Mammary epithelial cell (primary cell): ENCODE measurements at regions of chr3 and their contacts with region 1.

Region 1: GRCh38 chr3:39809181-39809994 is at the start of gene MYRIP:
- DNase-seq: no peak
- H3K4me3 ChIP-seq: peak within 1 kb of the TSS in 2 of 3 experiments; percentile 27 to 41
- H3K27ac ChIP-seq: no peak within 1 kb of the TSS
- H3K4me1 ChIP-seq: peaks cover 8% of the 10 kb centered on the region
- H3K27me3 ChIP-seq: peaks cover 38% of the 10 kb centered on the region
- CTCF ChIP-seq: no peak
- total RNA-seq, gene MYRIP: 0.17 TPM in 1 of 2 donors, not detected in the other

Region 2: DNA sequence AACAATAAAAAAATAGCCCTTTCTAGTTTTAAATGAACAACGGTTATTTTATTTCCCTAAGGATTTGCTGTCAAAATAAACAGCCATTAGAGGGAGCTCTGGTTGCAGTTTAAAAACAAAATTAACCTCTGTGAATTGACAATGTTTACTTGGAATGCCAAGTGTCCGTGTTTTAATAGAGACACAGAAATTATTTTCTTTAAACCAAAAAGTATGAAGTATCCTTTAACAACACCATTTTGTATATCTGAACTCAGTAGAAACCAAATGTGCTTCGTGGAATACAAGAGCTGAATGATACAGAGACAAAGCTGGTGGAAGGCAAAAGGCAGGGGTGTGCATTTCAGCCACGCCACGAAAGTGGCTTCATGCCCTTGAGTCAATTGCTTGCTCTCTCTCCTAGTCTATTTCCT is 267.5 kb before region 1 on chr3:
- CTCF ChIA-PET with region 1: no interaction called
- dilution Hi-C with region 1: no loop called
- in situ Hi-C with region 1: no loop called
- intact Hi-C with region 1: loop called (anchors 5 kb)
- DNase-seq: no peak
- H3K4me3 ChIP-seq: no peak overlapping the region
- H3K27ac ChIP-seq: no peak overlapping the region
- H3K4me1 ChIP-seq: peaks cover 8% of the 10 kb centered on the region
- H3K27me3 ChIP-seq: no peaks in the 10 kb centered on the region
- CTCF ChIP-seq: peak; percentile 49 to 63

Region 3: GRCh38 chr3:39707314-39707909 is 102.0 kb before region 1 on chr3:
- CTCF ChIA-PET with region 1: no interaction called
- dilution Hi-C with region 1: no loop called
- in situ Hi-C with region 1: no loop called
- intact Hi-C with region 1: no loop called
- DNase-seq: no peak
- H3K4me3 ChIP-seq: no peak overlapping the region
- H3K27ac ChIP-seq: no peak overlapping the region
- H3K4me1 ChIP-seq: no peaks in the 10 kb centered on the region
- H3K27me3 ChIP-seq: peaks cover 5% of the 10 kb centered on the region
- CTCF ChIP-seq: peak; percentile 57 to 67

Region 4: DNA sequence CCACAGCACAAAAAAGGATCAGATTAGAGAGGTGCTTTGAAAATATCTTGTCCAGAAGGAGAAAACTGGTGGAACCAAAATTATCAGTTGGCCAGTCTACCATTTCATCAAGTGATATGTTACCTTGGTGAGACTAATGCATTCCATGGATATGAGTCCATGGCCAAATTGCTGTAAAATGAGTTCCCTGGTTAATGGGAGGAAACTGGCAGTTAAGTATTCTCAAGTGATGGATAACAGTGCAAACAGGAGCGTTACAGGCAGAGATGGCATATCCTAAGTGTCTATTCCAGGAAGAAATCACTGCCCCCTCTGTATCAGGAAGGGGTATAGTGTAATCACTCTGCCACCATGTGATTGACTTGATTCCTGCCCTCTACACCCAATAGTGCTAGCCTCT is 34.1 kb after region 1 on chr3:
- CTCF ChIA-PET with region 1: no interaction called
- dilution Hi-C with region 1: no loop called
- in situ Hi-C with region 1: no loop called
- intact Hi-C with region 1: no loop called
- DNase-seq: no peak
- H3K4me3 ChIP-seq: no peak overlapping the region
- H3K27ac ChIP-seq: no peak overlapping the region
- H3K4me1 ChIP-seq: no peaks in the 10 kb centered on the region
- H3K27me3 ChIP-seq: no peaks in the 10 kb centered on the region
- CTCF ChIP-seq: no peak

Region 5: GRCh38 chr3:39962581-39962980 is 153.2 kb after region 1 on chr3:
- CTCF ChIA-PET with region 1: no interaction called
- dilution Hi-C with region 1: no loop called
- in situ Hi-C with region 1: loop called in 1 of 2 experiments (anchors 25 kb)
- intact Hi-C with region 1: no loop called
- DNase-seq: no peak
- H3K4me3 ChIP-seq: no peak overlapping the region
- H3K27ac ChIP-seq: no peak overlapping the region
- H3K4me1 ChIP-seq: no peaks in the 10 kb centered on the region
- H3K27me3 ChIP-seq: peaks cover 3% of the 10 kb centered on the region
- CTCF ChIP-seq: no peak

Region 6: GRCh38 chr3:40169983-40170382 is 360.6 kb after region 1 on chr3:
- CTCF ChIA-PET with region 1: no interaction called
- dilution Hi-C with region 1: no loop called
- in situ Hi-C with region 1: loop called (anchors 10 kb)
- intact Hi-C with region 1: no loop called
- DNase-seq: no peak
- H3K4me3 ChIP-seq: no peak overlapping the region
- H3K27ac ChIP-seq: no peak overlapping the region
- H3K4me1 ChIP-seq: no peaks in the 10 kb centered on the region
- H3K27me3 ChIP-seq: no peaks in the 10 kb centered on the region
- CTCF ChIP-seq: no peak

Region 7: GRCh38 chr3:40317061-40317855 is 507.9 kb after region 1 on chr3:
- CTCF ChIA-PET with region 1: no interaction called
- dilution Hi-C with region 1: no loop called
- in situ Hi-C with region 1: no loop called
- intact Hi-C with region 1: loop called (anchors 10 kb)
- DNase-seq: peak; percentile 29
- H3K4me3 ChIP-seq: no peak overlapping the region
- H3K27ac ChIP-seq: no peak overlapping the region
- H3K4me1 ChIP-seq: no peaks in the 10 kb centered on the region
- H3K27me3 ChIP-seq: no peaks in the 10 kb centered on the region
- CTCF ChIP-seq: peak; percentile 80 to 82